ENCODE measurements at regions of chr10 and their contacts with region 1.

Region 1: GRCh38 chr10:68074775-68075549 is at the start of gene HERC4:
- DNase-seq: peak; percentile 87 to 95 (median 94)
- H3K4me3 ChIP-seq: peak within 1 kb of the TSS; percentile 68 to 100 (median 92)
- H3K4me3 Mint-ChIP-seq: peak within 1 kb of the TSS; percentile 97
- H3K27ac ChIP-seq: peak within 1 kb of the TSS; percentile 96 to 100
- H3K27ac Mint-ChIP-seq: peak within 1 kb of the TSS; percentile 92 to 97 (median 95)
- H3K4me1 ChIP-seq: peaks cover 15 to 31% of the 10 kb centered on the region in 2 donors
- H3K4me1 Mint-ChIP-seq: peaks cover 30% of the 10 kb centered on the region
- H3K27me3 ChIP-seq: no peaks in the 10 kb centered on the region
- H3K27me3 Mint-ChIP-seq: no peaks in the 10 kb centered on the region
- CTCF ChIP-seq: no peak
- polyA plus RNA-seq, gene HERC4: 10.7 to 17.5 (median 14.3) TPM

Region 2: DNA sequence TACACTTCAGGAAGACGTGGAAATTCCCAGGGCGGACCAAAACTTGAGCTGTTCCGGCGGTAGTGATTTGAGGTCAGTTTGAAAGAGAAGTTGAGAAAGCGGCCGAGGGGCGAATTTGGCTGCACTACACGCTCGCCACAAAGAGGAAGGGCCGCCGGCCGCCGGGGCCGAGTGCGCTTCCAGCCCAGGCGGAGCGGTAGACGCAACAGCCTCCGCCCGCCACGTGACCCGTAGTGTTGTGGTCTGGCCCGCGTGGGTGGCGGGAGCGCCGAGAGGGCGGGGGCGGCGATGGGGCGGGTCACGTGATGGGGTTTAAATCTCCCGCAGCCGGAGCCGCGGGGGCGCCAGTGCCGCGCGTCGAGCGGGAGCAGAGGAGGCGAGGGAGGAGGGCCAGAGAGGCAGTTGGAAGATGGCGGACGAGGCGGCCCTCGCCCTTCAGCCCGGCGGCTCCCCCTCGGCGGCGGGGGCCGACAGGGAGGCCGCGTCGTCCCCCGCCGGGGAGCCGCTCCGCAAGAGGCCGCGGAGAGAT is 190.6 kb before region 1 on chr10 and contains the start of gene SIRT1:
- intact Hi-C with region 1: loop called in 1 of 2 experiments (anchors 10 kb)
- DNase-seq: peak; percentile 96 to 97 (median 97)
- H3K4me3 ChIP-seq: peak within 1 kb of the TSS; percentile 59 to 89 (median 69)
- H3K4me3 Mint-ChIP-seq: peak within 1 kb of the TSS; percentile 89 to 94
- H3K27ac ChIP-seq: peak within 1 kb of the TSS; percentile 73 to 87
- H3K27ac Mint-ChIP-seq: peak within 1 kb of the TSS; percentile 93 to 97 (median 96)
- H3K4me1 ChIP-seq: peaks cover 24 to 32% of the 10 kb centered on the region in 2 donors
- H3K4me1 Mint-ChIP-seq: peaks cover 30% of the 10 kb centered on the region
- H3K27me3 ChIP-seq: no peaks in the 10 kb centered on the region
- H3K27me3 Mint-ChIP-seq: peaks cover 0 to 4% (median 2%) of the 10 kb centered on the region in 3 donors
- CTCF ChIP-seq: no peak
- polyA plus RNA-seq, gene SIRT1: 4.4 to 8.4 (median 8.3) TPM